Activated CD4-positive, alpha-beta T cell treated with anti-CD3 and anti-CD28 coated beads for 36 hours (primary cell): ENCODE measurements at regions of chr1 and their contacts with region 1.

Region 1: DNA sequence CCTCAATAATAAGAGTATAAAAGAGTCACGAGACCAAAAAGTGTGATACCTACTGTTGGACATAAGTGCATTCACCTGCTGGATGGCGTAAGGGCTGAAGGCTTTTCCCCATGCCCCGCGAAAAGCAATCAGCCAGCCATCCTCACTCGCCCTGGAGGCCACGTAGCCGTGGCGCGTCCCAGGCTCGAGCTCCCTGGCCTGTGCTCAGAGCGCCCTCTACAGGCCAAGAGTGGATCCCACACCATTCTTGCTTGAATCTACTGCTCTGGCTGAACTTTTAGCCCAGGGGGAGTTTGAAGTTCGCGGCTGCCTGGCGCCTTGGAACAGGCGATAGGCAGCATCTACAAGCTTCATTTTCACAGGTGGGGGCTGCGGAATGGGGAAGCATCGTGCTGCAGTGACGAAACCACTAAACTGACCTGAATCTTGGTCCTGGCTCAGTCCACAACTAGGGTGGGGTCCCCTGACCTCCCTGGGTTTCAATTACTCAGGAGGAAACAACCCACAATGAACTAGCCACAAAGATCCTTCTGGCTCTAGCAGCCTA is 70.3 kb upstream of the SERBP1 start:
- DNase-seq: peak; percentile 95
- ATAC-seq: peak; percentile 100
- H3K4me3 Mint-ChIP-seq: no peak overlapping the region
- H3K27ac Mint-ChIP-seq: no peak overlapping the region
- H3K4me1 Mint-ChIP-seq: peaks cover 4% of the 10 kb centered on the region
- H3K27me3 Mint-ChIP-seq: peaks cover 1% of the 10 kb centered on the region

Region 2: GRCh38 chr1:67142931-67143330 is 357.6 kb before region 1 on chr1:
- CTCF ChIA-PET with region 1: interaction called, 3 read pairs
- POLR2A ChIA-PET with region 1: no interaction called
- intact Hi-C with region 1: loop called (anchors 2 to 10 kb)
- DNase-seq: no peak
- ATAC-seq: peak; percentile 81
- H3K4me3 Mint-ChIP-seq: no peak overlapping the region
- H3K27ac Mint-ChIP-seq: peak overlapping the region; percentile 74
- H3K4me1 Mint-ChIP-seq: peaks cover 36% of the 10 kb centered on the region
- H3K27me3 Mint-ChIP-seq: no peaks in the 10 kb centered on the region

Region 3: DNA sequence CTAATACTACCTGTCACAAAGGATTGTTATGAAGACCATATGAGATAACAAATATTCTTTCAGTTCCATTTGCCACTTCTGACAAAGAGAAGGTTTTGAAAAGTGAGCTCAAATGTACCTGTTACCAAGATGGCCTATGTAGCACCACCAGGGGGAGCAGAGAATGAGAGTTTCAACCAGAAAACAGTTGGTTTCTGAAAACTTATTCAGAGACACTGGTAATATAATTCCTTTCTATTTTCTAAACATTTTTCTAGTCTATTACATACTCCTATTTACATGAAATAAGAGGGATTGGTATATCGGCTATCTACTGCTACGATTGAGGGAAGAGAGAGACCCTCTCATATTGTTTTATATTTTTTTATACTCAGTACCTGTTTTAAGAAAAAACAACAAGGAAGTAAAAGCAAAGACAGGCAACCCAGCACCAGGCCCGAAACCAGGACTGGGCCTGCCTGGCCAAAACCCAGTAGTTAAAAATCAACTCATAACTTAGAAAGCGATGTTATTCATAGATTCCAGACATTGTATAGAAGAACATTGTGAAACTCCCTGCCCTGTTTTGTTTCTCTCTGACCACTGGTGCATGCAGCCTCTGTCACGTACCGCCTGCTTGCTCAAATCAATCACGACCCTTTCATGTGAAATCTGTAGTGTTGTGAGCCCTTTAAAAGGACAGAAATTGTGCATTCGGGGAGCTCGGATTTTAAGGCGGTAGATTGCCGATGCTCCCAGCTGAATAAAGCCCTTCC is 285.9 kb before region 1 on chr1:
- CTCF ChIA-PET with region 1: interaction called, 121 read pairs
- POLR2A ChIA-PET with region 1: no interaction called
- intact Hi-C with region 1: loop called (anchors 1 kb)
- DNase-seq: peak; percentile 75
- ATAC-seq: peak; percentile 48
- H3K4me3 Mint-ChIP-seq: no peak overlapping the region
- H3K27ac Mint-ChIP-seq: peak overlapping the region; percentile 19
- H3K4me1 Mint-ChIP-seq: peaks cover 46% of the 10 kb centered on the region
- H3K27me3 Mint-ChIP-seq: no peaks in the 10 kb centered on the region

Region 4: GRCh38 chr1:67347688-67348472 is 152.6 kb before region 1 on chr1:
- CTCF ChIA-PET with region 1: interaction called, 15 read pairs
- POLR2A ChIA-PET with region 1: no interaction called
- intact Hi-C with region 1: loop called (anchors 1 to 5 kb)
- DNase-seq: peak; percentile 42
- ATAC-seq: no peak
- H3K4me3 Mint-ChIP-seq: no peak overlapping the region
- H3K27ac Mint-ChIP-seq: no peak overlapping the region
- H3K4me1 Mint-ChIP-seq: peaks cover 38% of the 10 kb centered on the region
- H3K27me3 Mint-ChIP-seq: no peaks in the 10 kb centered on the region

Region 5: DNA sequence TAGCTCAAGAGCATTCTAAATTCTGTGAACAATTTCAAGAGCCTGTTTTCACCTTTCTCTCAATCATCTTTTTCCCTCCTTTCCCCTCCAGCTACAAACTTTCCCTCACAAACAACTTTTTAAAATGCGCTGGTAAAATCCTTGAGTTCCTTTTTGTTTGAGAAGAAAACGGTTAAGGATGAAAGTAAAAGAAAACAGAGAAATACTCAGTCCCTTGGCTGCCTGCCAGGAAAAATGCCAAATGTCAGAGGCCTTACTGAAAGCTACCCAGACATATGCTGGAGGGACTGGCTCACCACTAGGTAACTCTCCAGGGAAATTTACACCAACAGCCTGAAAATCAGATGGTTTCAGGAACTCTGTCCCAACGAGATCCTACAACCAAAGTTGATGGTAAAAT is 59.3 kb before region 1 on chr1:
- CTCF ChIA-PET with region 1: interaction called, 10 read pairs
- POLR2A ChIA-PET with region 1: no interaction called
- intact Hi-C with region 1: no loop called
- DNase-seq: peak; percentile 78
- ATAC-seq: peak; percentile 43
- H3K4me3 Mint-ChIP-seq: no peak overlapping the region
- H3K27ac Mint-ChIP-seq: peak overlapping the region; percentile 70
- H3K4me1 Mint-ChIP-seq: peaks cover 16% of the 10 kb centered on the region
- H3K27me3 Mint-ChIP-seq: peaks cover under 1% of the 10 kb centered on the region

Region 6: GRCh38 chr1:67524143-67525052 is 23.9 kb after region 1 on chr1:
- CTCF ChIA-PET with region 1: interaction called, 12 read pairs
- POLR2A ChIA-PET with region 1: no interaction called
- intact Hi-C with region 1: no loop called
- DNase-seq: no peak
- ATAC-seq: no peak
- H3K4me3 Mint-ChIP-seq: no peak overlapping the region
- H3K27ac Mint-ChIP-seq: no peak overlapping the region
- H3K4me1 Mint-ChIP-seq: no peaks in the 10 kb centered on the region
- H3K27me3 Mint-ChIP-seq: peaks cover 6% of the 10 kb centered on the region